ENCODE measurements at regions of chr1 and their contacts with region 1.

Region 1: DNA sequence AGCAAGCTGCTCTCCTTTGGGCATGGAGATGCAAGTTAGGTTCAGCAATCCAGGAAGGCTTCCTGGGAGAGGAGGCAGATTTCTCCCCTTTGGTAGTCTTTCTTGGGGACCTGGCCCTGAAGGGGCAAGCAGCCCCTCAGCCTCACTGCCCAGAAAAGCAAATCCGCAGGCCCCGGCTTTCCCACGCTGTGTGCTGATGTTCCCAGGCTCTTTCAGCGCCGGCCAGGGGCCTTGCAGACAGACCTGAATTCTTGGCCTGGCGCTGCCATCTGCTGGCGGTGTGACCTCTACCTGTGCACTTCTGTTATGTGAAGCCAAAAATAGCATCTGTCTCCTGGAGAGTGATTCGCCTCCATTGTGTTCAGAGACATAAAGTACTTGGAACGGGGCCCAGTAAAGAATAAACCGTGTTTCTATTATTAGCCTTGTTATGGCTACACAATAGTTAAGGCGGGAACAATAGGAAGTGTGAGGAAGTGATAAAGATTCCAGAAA is 64.8 kb downstream of the ALPL start:
- DNase-seq: peak; percentile 85 to 86
- H3K4me3 ChIP-seq: peak overlapping the region in 2 of 3 donors; percentile 23 to 37
- H3K27ac ChIP-seq: peak overlapping the region; percentile 64 to 72
- H3K4me1 ChIP-seq: peaks cover 0 to 4% of the 10 kb centered on the region in 2 donors
- H3K27me3 ChIP-seq: no peaks in the 10 kb centered on the region
- CTCF ChIP-seq: peak in 2 of 3 donors; percentile 57 to 64
- POLR2A ChIP-seq: no peak

Region 2: GRCh38 chr1:20732588-20733360 is 841.2 kb before region 1 on chr1 and contains the start of gene SH2D5:
- intact Hi-C with region 1: no loop called
- DNase-seq: peak; percentile 72 to 86
- H3K4me3 ChIP-seq: peak within 1 kb of the TSS; percentile 48 to 84 (median 62)
- H3K27ac ChIP-seq: peak within 1 kb of the TSS; percentile 56 to 76
- H3K4me1 ChIP-seq: peaks cover 0 to 12% of the 10 kb centered on the region in 2 donors
- H3K27me3 ChIP-seq: peaks cover 4% of the 10 kb centered on the region in 2 donors
- CTCF ChIP-seq: peak in 2 of 3 donors; percentile 44 to 56
- POLR2A ChIP-seq: no peak
- total RNA-seq, gene SH2D5: under 0.01 to 0.29 TPM in 2 of 3 donors, not detected in the other

Region 3: DNA sequence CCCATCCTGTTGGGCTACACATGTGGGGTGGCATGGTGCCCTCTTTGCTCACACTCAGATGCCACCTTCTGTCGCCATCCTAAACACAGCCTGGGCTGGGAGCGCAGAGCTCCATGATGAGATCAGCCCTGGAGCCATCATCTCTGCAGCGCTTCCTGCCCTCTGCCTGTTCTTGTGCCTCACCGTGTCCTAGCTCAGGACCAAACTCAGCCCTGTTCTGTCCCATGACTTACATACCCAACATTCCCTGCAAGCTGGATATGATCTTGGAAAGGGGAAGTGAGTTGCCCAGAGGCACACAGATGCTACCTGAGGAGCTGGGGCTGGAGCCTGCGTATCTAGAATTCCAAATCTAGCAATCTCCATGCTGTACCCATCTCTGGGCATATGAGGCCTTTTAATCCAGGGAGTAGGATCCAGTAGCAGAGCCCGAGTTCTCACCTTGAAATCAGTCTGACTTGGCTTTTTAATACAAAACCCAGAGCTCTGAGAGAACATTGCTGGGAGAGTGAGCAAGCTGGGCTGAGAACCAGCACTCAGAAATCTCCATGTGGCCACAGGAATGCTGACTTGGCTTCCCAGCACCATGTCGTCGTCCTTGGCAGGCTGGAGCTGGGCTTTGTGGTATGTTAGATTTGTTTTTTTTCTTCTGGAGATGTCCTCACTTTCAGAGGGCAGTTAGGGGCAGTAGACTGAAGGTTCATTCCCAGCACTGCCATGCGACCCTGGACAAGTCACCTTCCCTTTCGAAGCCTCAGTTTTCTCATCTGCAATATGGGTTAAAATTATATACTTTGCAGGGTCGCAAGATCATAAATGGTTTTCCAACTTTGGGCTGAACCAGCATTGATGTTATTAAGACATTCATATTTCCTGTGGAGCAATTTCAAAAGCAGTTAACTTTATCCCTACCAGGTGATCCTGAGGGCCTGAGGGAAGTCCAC is 62.2 kb before region 1 on chr1:
- intact Hi-C with region 1: loop called (anchors 10 kb)
- DNase-seq: peak; percentile 80 to 94
- H3K4me3 ChIP-seq: peak overlapping the region in 1 of 3 donors; percentile 68
- H3K27ac ChIP-seq: peak overlapping the region; percentile 78 to 94
- H3K4me1 ChIP-seq: peaks cover 8 to 23% of the 10 kb centered on the region in 2 donors
- H3K27me3 ChIP-seq: peaks cover 0 to 4% of the 10 kb centered on the region in 2 donors
- CTCF ChIP-seq: no peak
- POLR2A ChIP-seq: no peak